Activated CD4-positive, alpha-beta memory T cell treated with anti-CD3 and anti-CD28 coated beads for 36 hours (primary cell): ENCODE measurements at regions of chr17 and their contacts with region 1.

Region 1: DNA sequence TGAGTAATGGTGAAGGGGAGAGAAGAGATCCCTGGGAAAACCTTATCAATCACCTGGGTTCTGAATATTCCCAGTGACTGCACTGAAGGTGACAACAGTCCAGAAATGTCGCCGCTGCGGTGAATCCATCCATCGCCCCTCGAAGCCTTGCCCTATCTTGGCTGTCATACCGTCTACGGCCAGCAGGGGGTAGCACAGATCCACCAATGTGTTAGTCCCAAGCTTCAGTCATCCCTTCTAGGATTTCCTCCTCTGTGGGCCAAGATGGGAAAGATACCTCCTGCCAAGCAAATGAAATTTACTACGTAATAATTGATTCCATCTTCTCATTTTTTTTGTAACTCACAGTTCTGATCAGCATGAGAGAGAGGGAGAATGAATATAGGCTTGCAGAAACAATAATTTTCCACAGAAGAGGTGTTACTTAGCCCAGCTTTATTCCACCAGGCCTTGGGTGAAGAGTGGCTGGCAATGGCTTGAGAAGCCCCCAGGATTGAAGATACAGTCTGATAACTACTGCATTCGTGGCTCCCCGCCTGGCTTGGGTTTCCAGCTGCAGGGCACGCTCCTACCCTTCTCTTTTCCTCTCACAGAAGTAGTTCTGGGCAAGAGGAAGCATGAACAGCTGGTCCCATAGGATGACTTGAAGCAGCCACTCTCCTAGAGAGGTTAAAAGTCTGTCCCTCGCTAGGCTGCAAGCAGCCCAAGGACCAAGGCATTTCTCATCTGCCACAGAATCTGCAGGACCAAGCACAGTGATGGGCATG is 2.6 kb upstream of the FMNL1 start:
- DNase-seq: peak; percentile 91
- H3K4me3 Mint-ChIP-seq: peak overlapping the region; percentile 81
- H3K27ac Mint-ChIP-seq: peak overlapping the region; percentile 73
- H3K4me1 Mint-ChIP-seq: peaks cover 30% of the 10 kb centered on the region
- H3K27me3 Mint-ChIP-seq: no peaks in the 10 kb centered on the region

Region 2: GRCh38 chr17:45161019-45161825 is 57.9 kb before region 1 on chr17:
- CTCF ChIA-PET with region 1: interaction called, 10 read pairs
- POLR2A ChIA-PET with region 1: interaction called, 3 read pairs
- intact Hi-C with region 1: no loop called
- DNase-seq: peak; percentile 99
- H3K4me3 Mint-ChIP-seq: peak overlapping the region; percentile 99
- H3K27ac Mint-ChIP-seq: peak overlapping the region; percentile 99
- H3K4me1 Mint-ChIP-seq: peaks cover 38% of the 10 kb centered on the region
- H3K27me3 Mint-ChIP-seq: peaks cover 2% of the 10 kb centered on the region

Region 3: DNA sequence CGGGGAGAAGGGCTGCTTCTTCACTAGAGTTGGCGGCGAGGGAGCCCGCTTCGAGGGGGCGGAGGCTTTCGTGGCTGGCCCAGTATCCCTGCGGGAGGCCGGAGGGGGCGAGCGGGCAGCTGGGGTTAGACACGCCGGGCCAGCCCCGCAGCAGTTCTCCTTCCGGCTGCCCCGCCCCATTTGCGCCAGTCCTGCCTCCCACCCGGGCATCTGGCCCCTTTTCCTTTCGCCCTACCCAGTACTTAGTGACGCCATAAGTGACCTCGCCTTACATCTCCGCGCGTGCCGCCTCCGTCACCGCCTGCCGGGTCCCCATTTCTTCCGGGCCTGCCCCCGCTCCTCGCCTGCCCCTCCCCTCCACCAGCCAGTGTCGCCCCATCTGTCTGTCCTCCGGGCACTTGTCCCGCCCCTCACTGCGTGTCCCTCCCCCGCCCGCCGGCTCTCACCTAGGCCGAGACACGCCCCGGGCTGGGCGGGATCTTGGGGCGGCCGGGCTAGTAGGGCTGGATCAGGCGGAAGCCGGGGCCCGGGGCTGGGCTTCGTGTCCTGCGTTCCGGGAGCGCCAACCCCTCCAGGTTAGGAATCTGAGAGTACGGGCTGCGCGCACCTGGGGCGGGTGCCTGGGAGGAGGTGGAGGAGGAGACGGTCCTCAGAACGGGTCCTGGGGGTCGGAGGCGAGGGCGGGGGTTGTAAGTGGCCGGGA is 28.5 kb after region 1 on chr17:
- CTCF ChIA-PET with region 1: interaction called, 77 read pairs
- POLR2A ChIA-PET with region 1: interaction called, 32 read pairs
- intact Hi-C with region 1: loop called (anchors 1 kb)
- DNase-seq: peak; percentile 99
- H3K4me3 Mint-ChIP-seq: peak overlapping the region; percentile 86
- H3K27ac Mint-ChIP-seq: peak overlapping the region; percentile 94
- H3K4me1 Mint-ChIP-seq: peaks cover 59% of the 10 kb centered on the region
- H3K27me3 Mint-ChIP-seq: no peaks in the 10 kb centered on the region

Region 4: GRCh38 chr17:45261577-45262515 is 42.8 kb after region 1 on chr17 and contains the start of gene SPATA32:
- CTCF ChIA-PET with region 1: interaction called, 18 read pairs
- POLR2A ChIA-PET with region 1: interaction called, 3 read pairs
- intact Hi-C with region 1: loop called (anchors 1 kb)
- DNase-seq: peak; percentile 79
- H3K4me3 Mint-ChIP-seq: peak within 1 kb of the TSS; percentile 69
- H3K27ac Mint-ChIP-seq: peak within 1 kb of the TSS; percentile 67
- H3K4me1 Mint-ChIP-seq: peaks cover 21% of the 10 kb centered on the region
- H3K27me3 Mint-ChIP-seq: no peaks in the 10 kb centered on the region
- total RNA-seq, gene SPATA32: 0.12 TPM in 1 of 2 experiments, not detected in the other

Region 5: DNA sequence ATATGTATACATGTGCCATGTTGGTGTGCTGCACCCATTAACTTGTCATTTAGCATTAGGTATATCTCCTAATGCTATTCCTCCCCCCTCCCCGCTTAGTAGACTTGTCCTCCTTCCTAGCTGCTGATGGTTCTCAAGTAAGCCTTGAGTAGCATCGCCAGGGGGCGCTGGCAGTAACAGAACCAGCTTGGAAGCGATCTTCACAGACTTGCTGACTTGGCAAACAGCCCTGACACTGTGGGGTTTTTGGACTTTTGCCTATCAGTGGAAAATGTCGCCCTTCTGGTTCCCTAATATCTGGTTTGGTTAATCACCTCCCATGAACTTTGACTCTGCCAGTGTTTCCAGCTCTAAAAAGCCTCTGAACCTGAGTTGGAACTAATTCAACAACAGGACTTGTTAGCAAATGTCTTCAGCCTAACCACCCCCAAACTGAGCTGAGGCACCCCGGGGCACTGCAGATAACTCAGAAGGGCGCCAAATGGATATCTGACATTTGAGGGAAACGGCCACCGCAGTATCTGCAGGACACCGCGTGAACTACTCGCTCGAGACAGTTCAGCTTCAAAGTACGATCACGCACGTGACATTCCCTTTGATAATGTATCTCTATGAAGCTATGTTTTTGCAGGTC is 58.3 kb after region 1 on chr17:
- CTCF ChIA-PET with region 1: interaction called, 49 read pairs
- POLR2A ChIA-PET with region 1: no interaction called
- intact Hi-C with region 1: no loop called
- DNase-seq: peak; percentile 93
- H3K4me3 Mint-ChIP-seq: no peak overlapping the region
- H3K27ac Mint-ChIP-seq: peak overlapping the region; percentile 74
- H3K4me1 Mint-ChIP-seq: peaks cover 16% of the 10 kb centered on the region
- H3K27me3 Mint-ChIP-seq: no peaks in the 10 kb centered on the region

Region 6: DNA sequence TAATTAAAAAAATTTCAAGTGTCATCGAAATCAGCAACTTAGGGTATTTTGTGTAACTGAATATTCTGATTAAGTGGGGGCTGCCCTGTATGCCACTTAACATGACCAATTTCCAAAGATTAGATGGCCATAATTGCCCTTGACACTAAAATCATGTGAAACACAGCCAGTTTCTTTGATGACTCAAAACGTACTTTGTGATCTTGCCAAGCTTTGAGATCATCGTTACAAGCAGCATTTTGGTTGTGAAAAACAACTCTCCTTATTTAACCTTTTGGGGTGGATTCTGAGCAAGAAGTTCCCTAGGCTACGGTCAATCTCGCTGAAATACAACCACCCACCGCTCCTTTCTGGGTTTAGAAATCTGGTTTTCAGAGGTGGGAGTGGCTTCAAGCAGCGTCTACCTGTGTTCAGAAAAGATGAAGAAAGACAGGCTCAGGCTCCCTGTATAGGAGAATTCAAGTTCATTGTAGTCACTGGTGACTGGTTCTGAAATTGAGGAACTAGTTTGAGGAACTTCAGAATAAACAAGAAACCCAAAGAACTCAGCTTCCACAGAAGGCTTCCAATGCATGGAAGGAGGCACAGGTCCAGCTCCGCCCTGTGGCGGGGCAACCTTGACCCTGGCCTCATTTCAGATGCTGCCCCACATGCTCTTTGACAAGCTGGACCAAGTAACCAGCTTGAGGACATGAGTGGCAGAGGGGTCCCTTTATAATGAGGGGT is 88.4 kb after region 1 on chr17:
- CTCF ChIA-PET with region 1: interaction called, 21 read pairs
- POLR2A ChIA-PET with region 1: interaction called, 52 read pairs
- intact Hi-C with region 1: no loop called
- DNase-seq: peak; percentile 80
- H3K4me3 Mint-ChIP-seq: peak overlapping the region; percentile 53
- H3K27ac Mint-ChIP-seq: peak overlapping the region; percentile 97
- H3K4me1 Mint-ChIP-seq: peaks cover 84% of the 10 kb centered on the region
- H3K27me3 Mint-ChIP-seq: no peaks in the 10 kb centered on the region

Region 7: DNA sequence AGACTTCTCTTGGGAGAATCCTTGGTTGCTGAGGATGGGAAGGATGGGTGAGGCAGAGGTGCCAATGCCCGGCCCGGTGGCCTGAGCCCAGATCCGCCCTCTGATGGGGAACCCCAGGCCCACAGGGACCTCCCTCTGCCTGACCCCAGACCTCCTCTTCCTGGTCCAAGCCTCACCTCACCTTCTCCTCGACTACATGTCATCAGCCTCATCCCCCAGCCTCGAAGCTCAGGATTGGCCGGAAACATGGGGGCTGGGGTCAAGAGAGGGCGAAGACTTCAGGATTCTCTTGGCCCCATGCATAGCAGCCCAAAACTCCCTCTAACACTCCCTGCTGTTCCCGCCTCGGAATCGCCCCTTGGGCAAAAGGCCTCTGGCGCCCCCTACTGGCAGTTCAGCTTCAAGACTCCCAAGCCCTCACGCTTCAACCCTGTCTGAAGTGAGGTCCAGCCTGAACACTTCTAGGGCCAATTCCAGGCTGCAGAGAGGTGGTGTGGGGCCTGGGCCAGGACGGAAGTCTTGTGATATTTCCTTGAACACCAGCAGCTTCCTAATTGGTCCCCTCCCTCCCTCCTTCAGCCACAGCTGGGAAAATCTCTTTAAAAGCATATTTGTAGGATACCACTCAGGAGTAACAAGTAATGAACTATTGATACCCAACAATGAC is 166.4 kb after region 1 on chr17:
- CTCF ChIA-PET with region 1: interaction called, 55 read pairs
- POLR2A ChIA-PET with region 1: no interaction called
- intact Hi-C with region 1: loop called (anchors 1 kb)
- DNase-seq: peak; percentile 93
- H3K4me3 Mint-ChIP-seq: no peak overlapping the region
- H3K27ac Mint-ChIP-seq: no peak overlapping the region
- H3K4me1 Mint-ChIP-seq: peaks cover 13% of the 10 kb centered on the region
- H3K27me3 Mint-ChIP-seq: peaks cover 7% of the 10 kb centered on the region